ENCODE measurements at regions of chr5 and their contacts with region 1.

Region 1: DNA sequence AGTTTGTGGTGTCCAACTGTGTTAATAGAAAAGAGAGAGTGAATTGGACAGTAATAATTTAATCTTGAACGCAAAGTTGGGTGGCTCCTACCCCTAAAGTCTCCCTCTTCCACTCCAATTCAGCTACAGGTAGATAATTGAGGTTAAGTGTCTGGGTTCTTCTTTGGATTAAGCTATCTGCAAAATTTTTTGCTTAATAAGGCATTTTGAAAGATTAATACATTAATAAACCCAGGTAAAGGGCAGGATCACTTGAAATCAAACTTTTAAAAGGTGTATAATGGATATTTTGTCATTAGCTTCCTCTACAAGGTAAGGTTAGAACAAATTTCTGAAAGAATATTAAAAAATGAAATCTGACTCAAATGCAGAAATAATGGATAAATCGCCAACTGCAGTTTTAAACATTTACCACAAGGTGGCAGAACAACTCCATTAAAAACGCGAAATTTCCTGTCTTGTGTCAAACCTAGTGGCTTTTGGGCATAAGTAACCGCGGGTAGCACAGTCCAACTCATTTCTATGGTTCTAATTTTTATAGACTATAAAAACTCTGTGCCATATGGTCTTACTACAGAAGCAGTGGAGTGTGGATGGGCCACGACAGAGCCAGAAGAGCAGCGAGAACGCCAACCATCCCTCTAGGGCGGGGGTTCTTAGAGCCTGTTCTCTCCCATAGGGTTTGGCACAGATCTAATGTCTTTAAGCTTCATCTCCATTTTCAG is 276.5 kb downstream of the ARHGEF28 start:
- DNase-seq: peak in 4 of 5 donors; percentile 24 to 89 (median 62)
- H3K4me3 ChIP-seq: no peak overlapping the region
- H3K27ac ChIP-seq: peak overlapping the region in 1 of 2 donors; percentile 20
- H3K4me1 ChIP-seq: peaks cover 0 to 8% (median 7%) of the 10 kb centered on the region in 3 donors
- H3K27me3 ChIP-seq: no peaks in the 10 kb centered on the region
- CTCF ChIP-seq: peak; percentile 85

Region 2: DNA sequence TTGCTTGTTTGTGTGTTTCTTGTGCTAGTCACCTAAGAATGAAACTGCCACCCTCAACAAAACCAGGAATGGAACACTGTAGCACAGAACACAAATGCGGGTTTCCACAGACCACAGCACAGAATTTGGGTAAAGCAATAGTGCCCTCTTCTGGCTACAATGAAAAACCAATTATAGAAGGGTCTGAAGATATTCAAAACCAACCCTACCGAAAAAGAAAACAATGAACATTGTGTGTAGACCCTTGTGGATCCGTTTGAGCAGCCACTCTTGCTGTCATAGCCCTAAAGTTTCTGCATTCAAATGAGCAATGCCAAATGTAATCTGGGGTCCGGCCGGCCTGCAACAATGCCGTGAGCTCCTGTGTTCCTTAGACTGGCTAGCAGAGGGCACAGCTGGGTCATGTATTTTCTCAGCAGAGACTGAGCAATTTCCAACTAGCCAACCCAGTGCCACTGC is 746.4 kb after region 1 on chr5:
- intact Hi-C with region 1: loop called (anchors 5 kb)
- DNase-seq: peak in 3 of 5 donors; percentile 54 to 90 (median 85)
- H3K4me3 ChIP-seq: no peak overlapping the region
- H3K27ac ChIP-seq: no peak overlapping the region
- H3K4me1 ChIP-seq: peaks cover 0 to 3% (median 0%) of the 10 kb centered on the region in 3 donors
- H3K27me3 ChIP-seq: no peaks in the 10 kb centered on the region
- CTCF ChIP-seq: peak; percentile 63

Measured in kidney (tissue), 22 donors.